ENCODE measurements at regions of chr19 and their contacts with region 1.

Region 1: GRCh38 chr19:771332-771785 is 20.4 kb downstream of the MISP start:
- DNase-seq: no peak
- H3K4me3 ChIP-seq: no peak overlapping the region
- H3K27ac ChIP-seq: no peak overlapping the region
- H3K4me1 ChIP-seq: no peaks in the 10 kb centered on the region
- H3K27me3 ChIP-seq: no peaks in the 10 kb centered on the region
- CTCF ChIP-seq: peak in 2 of 3 experiments; percentile 25 to 31
- POLR2A ChIP-seq: no peak

Region 2: DNA sequence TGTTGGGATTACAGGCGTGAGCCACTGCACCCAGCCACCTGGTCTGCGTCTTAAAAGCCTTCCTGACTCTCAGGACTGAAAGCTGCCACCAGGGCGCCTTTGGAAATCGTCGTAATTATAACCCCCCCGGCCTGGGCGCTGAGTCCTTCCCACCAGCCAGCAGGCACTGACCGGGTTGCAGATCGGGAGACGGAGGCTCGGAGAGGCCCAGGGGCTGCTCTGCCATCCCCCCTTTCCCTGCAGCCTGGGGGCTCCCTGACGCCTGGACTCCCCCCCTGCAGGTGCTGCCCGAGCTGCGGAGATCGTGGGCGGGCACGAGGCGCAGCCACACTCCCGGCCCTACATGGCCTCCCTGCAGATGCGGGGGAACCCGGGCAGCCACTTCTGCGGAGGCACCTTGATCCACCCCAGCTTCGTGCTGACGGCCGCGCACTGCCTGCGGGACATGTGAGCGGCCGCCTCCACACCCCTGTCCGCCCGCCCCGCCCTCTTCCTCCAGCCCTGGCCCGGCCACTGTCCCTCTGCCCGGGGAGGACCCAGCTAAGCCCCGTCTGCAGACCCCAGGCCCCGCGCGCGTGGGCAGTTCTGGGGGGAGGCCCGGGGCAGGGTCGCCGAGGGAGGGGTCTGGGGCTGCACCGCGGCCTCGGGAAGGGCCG is 71.9 kb after region 1 on chr19:
- intact Hi-C with region 1: loop called (anchors 10 kb)
- DNase-seq: no peak
- H3K4me3 ChIP-seq: peak overlapping the region in 1 of 2 donors; percentile 38
- H3K27ac ChIP-seq: no peak overlapping the region
- H3K4me1 ChIP-seq: peaks cover 16% of the 10 kb centered on the region
- H3K27me3 ChIP-seq: no peaks in the 10 kb centered on the region
- CTCF ChIP-seq: no peak
- POLR2A ChIP-seq: no peak

Region 3: GRCh38 chr19:1455336-1456120 is 684.2 kb after region 1 on chr19:
- intact Hi-C with region 1: no loop called
- DNase-seq: peak; percentile 56
- H3K4me3 ChIP-seq: peak overlapping the region in 1 of 2 donors; percentile 14
- H3K27ac ChIP-seq: no peak overlapping the region
- H3K4me1 ChIP-seq: peaks cover 22% of the 10 kb centered on the region
- H3K27me3 ChIP-seq: no peaks in the 10 kb centered on the region
- CTCF ChIP-seq: no peak
- POLR2A ChIP-seq: no peak